Activated B cell treated with CpG ODN at 0.5 μM for 24 hours (primary cell): ENCODE measurements at regions of chr17 and their contacts with region 1.

Region 1: GRCh38 chr17:75289115-75289831 is at the start of gene SLC25A19:
- DNase-seq: peak; percentile 86
- ATAC-seq: peak; percentile 86
- H3K4me3 Mint-ChIP-seq: peak within 1 kb of the TSS; percentile 94
- H3K27ac Mint-ChIP-seq: peak within 1 kb of the TSS; percentile 100
- H3K4me1 Mint-ChIP-seq: peaks cover 52% of the 10 kb centered on the region
- H3K27me3 Mint-ChIP-seq: no peaks in the 10 kb centered on the region
- CTCF ChIP-seq: no peak
- total RNA-seq, gene SLC25A19: 87.6 and 96.7 TPM in 2 replicates

Region 2: GRCh38 chr17:75182569-75183450 is 106.5 kb before region 1 on chr17 and contains the start of gene SUMO2:
- CTCF ChIA-PET with region 1: no interaction called
- POLR2A ChIA-PET with region 1: interaction called, 6 read pairs
- intact Hi-C with region 1: loop called (anchors 1 kb)
- DNase-seq: peak; percentile 96
- ATAC-seq: peak; percentile 82
- H3K4me3 Mint-ChIP-seq: peak within 1 kb of the TSS; percentile 86
- H3K27ac Mint-ChIP-seq: peak within 1 kb of the TSS; percentile 97
- H3K4me1 Mint-ChIP-seq: peaks cover 38% of the 10 kb centered on the region
- H3K27me3 Mint-ChIP-seq: no peaks in the 10 kb centered on the region
- CTCF ChIP-seq: no peak
- total RNA-seq, gene SUMO2: 365 and 394 TPM in 2 replicates

Region 3: DNA sequence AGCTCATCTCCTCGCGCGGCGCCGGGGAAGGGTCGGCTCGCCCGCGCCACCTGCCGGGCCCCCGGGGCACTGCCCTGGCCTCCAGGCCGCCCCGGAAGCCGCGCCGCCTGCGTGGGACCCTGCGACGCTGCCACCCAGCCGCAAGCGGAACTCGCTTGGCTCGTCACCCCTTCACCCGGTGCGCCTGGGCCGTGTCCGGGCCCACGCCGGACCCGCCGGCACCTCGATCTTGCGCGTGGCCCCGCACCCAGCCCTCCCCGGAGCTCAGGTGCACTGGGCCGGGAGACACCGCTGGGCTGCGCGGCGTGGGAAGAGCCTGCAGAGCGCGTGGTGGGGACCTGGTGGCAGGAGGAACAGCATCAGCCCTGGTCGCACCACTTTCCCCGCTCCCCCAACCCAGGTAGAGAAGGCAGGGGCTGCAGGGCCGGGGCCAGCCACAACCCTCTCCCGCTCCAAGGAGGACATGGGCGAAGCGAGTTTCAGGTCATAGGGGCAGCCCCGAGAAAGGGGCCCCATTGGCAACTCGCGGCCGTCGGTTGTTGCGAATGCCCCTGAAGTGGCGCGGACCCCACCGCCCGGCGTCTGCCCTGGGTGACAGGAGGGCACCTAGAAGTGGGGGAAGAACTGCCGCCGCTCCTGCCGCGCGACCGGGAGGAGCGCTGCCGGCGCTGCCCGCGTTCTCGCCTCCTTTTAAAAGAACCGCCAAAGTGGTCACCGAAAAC is 17.9 kb before region 1 on chr17:
- CTCF ChIA-PET with region 1: interaction called, 38 read pairs
- POLR2A ChIA-PET with region 1: interaction called, 97 read pairs
- intact Hi-C with region 1: loop called (anchors 1 kb)
- DNase-seq: peak; percentile 95
- ATAC-seq: peak; percentile 91
- H3K4me3 Mint-ChIP-seq: peak overlapping the region; percentile 82
- H3K27ac Mint-ChIP-seq: peak overlapping the region; percentile 76
- H3K4me1 Mint-ChIP-seq: peaks cover 20% of the 10 kb centered on the region
- H3K27me3 Mint-ChIP-seq: no peaks in the 10 kb centered on the region
- CTCF ChIP-seq: no peak

Region 4: GRCh38 chr17:75338335-75338734 is 49.1 kb after region 1 on chr17:
- CTCF ChIA-PET with region 1: interaction called, 10 read pairs
- POLR2A ChIA-PET with region 1: interaction called, 10 read pairs
- intact Hi-C with region 1: no loop called
- DNase-seq: no peak
- ATAC-seq: peak; percentile 19
- H3K4me3 Mint-ChIP-seq: peak overlapping the region; percentile 62
- H3K27ac Mint-ChIP-seq: peak overlapping the region; percentile 84
- H3K4me1 Mint-ChIP-seq: peaks cover 89% of the 10 kb centered on the region
- H3K27me3 Mint-ChIP-seq: no peaks in the 10 kb centered on the region
- CTCF ChIP-seq: no peak

Region 5: GRCh38 chr17:75393523-75394331 is 104.5 kb after region 1 on chr17:
- CTCF ChIA-PET with region 1: interaction called, 4 read pairs
- POLR2A ChIA-PET with region 1: interaction called, 32 read pairs
- intact Hi-C with region 1: loop called (anchors 1 kb)
- DNase-seq: peak; percentile 84
- ATAC-seq: peak; percentile 96
- H3K4me3 Mint-ChIP-seq: peak overlapping the region; percentile 92
- H3K27ac Mint-ChIP-seq: peak overlapping the region; percentile 88
- H3K4me1 Mint-ChIP-seq: peaks cover 84% of the 10 kb centered on the region
- H3K27me3 Mint-ChIP-seq: no peaks in the 10 kb centered on the region
- CTCF ChIP-seq: no peak

Region 6: GRCh38 chr17:75456417-75457046 is 167.3 kb after region 1 on chr17 and contains the start of gene TMEM94:
- CTCF ChIA-PET with region 1: interaction called, 6 read pairs
- POLR2A ChIA-PET with region 1: interaction called, 18 read pairs
- intact Hi-C with region 1: loop called (anchors 1 kb)
- DNase-seq: peak; percentile 74
- ATAC-seq: peak; percentile 94
- H3K4me3 Mint-ChIP-seq: peak within 1 kb of the TSS; percentile 91
- H3K27ac Mint-ChIP-seq: peak within 1 kb of the TSS; percentile 88
- H3K4me1 Mint-ChIP-seq: peaks cover 41% of the 10 kb centered on the region
- H3K27me3 Mint-ChIP-seq: no peaks in the 10 kb centered on the region
- CTCF ChIP-seq: no peak
- total RNA-seq, gene TMEM94: 80.3 and 86.6 TPM in 2 replicates

Region 7: DNA sequence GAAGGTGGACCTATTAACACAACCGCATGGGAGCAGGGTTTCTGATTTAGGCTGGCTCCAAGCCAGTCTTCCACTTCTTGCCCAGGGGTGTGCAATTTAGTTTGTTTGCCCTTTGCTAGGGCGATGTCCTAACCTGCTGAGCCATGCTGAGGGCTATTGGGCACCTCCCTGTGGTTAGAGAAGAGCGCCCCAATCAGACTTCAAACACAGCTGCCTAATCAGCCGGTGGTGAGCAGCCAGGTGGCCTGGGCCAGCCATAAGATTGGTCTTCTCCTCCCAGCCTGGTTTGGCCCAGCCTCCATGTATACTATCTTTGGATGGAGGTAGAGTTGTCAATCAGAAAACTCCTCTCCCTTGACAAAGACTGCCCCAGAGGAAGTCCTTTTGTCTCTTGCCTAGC is 182.9 kb after region 1 on chr17:
- CTCF ChIA-PET with region 1: no interaction called
- POLR2A ChIA-PET with region 1: no interaction called
- intact Hi-C with region 1: no loop called
- DNase-seq: no peak
- ATAC-seq: no peak
- H3K4me3 Mint-ChIP-seq: no peak overlapping the region
- H3K27ac Mint-ChIP-seq: no peak overlapping the region
- H3K4me1 Mint-ChIP-seq: no peaks in the 10 kb centered on the region
- H3K27me3 Mint-ChIP-seq: no peaks in the 10 kb centered on the region
- CTCF ChIP-seq: no peak

Region 8: GRCh38 chr17:76264755-76265596 is 975.7 kb after region 1 on chr17 and contains the start of gene UBALD2:
- CTCF ChIA-PET with region 1: no interaction called
- POLR2A ChIA-PET with region 1: no interaction called
- intact Hi-C with region 1: loop called (anchors 10 kb)
- DNase-seq: peak; percentile 97
- ATAC-seq: peak; percentile 77
- H3K4me3 Mint-ChIP-seq: peak within 1 kb of the TSS; percentile 92
- H3K27ac Mint-ChIP-seq: peak within 1 kb of the TSS; percentile 94
- H3K4me1 Mint-ChIP-seq: peaks cover 80% of the 10 kb centered on the region
- H3K27me3 Mint-ChIP-seq: no peaks in the 10 kb centered on the region
- CTCF ChIP-seq: no peak
- total RNA-seq, gene UBALD2: 144 and 152 TPM in 2 replicates